ENCODE measurements at regions of chr12 and their contacts with region 1.

Region 1: DNA sequence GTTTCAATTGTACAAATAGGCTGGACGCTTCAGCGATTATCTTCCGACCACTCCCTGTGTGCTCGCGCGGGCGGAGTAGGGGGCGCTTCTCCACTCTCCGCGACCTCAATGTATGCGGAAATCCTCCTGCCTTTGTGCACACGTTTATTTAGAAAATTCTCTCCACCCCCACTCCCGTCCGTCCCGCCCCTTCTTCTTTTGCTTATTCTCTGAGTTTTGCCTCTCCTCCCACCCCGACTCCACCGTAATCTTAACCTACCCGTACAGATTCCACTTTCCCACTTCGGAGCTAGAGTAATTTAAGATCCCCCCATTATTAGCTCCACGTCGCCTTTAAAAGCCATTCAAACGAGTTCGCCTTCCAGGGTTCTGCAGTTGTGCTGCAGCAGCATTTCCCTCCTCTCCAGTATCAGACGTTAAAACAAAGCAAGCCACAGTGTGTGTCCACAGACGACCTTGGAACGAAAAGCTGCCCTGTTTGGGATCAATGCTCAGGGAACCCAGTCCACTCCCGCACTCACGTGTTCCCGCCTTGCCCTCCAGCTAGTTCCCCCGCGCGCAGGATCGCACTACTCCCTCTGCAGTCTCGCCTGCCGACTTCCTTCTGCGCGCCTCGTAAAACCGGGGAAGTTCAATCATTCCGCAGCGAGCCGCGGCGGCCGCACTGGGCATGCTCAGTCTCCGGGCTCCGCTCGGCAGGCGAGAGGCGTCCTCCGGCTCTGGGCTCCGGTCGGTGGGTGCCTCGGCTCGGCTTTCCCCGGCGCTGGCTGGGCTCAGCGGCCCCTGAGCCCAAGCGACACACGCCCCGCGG is at the start of gene ANO6:
- DNase-seq: peak; percentile 95
- H3K4me3 Mint-ChIP-seq: peak within 1 kb of the TSS; percentile 93
- H3K27ac Mint-ChIP-seq: peak within 1 kb of the TSS; percentile 90
- H3K4me1 Mint-ChIP-seq: peaks cover 30% of the 10 kb centered on the region
- H3K27me3 Mint-ChIP-seq: no peaks in the 10 kb centered on the region
- total RNA-seq, gene ANO6: 24.1 and 24.8 TPM in 2 replicates

Region 2: DNA sequence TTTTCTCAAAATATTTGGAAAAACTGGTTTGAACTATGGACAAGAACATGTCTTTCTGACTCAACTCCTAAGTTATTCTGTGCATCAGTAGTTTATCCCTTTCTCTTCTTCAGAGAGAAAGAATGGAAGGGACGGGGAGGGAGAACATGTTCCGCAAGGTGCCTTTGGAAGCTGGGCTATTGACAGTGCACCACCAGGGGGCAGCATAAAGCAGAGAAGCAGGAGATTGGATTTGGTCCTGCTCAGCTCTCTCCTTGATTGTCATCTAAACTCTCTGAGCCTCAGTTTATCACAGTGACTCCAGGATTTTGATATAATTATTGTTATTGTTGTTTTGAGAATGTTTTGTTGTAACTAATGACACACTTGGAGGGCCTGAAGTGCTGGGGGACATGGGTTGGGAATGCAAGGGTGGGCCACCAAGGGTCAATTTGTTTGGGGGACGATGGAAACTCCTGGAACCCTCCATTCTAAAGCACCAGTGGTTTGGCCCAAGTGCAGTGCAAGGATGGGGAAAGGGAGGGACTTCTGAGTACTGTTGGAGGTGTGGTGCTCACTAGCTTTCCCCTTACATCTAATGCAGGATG is 45.1 kb before region 1 on chr12:
- intact Hi-C with region 1: loop called (anchors 5 kb)
- DNase-seq: peak; percentile 92
- H3K4me3 Mint-ChIP-seq: no peak overlapping the region
- H3K27ac Mint-ChIP-seq: no peak overlapping the region
- H3K4me1 Mint-ChIP-seq: no peaks in the 10 kb centered on the region
- H3K27me3 Mint-ChIP-seq: peaks cover 4% of the 10 kb centered on the region

Region 3: DNA sequence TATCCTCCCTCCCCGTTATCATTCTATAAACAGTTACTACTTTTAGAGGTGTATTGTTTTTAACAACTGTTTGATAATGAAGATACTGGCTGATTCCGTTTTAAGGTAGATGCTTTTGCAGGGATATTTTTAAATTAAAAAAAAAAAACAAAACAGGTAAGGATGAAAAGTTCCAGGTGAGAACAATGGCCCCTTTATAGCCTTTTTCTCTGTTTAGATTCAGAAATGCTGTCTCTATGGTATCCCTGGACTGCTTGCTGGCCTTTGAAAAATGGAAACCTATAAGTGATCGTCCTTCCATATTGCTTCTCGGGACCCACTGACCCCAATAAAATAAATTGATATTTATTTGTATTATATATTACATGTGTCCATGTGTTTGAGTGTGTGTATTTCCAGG is 22.9 kb before region 1 on chr12:
- intact Hi-C with region 1: loop called (anchors 2 kb)
- DNase-seq: no peak
- H3K4me3 Mint-ChIP-seq: no peak overlapping the region
- H3K27ac Mint-ChIP-seq: no peak overlapping the region
- H3K4me1 Mint-ChIP-seq: peaks cover 13% of the 10 kb centered on the region
- H3K27me3 Mint-ChIP-seq: no peaks in the 10 kb centered on the region

Region 4: GRCh38 chr12:45205165-45205825 is 10.3 kb before region 1 on chr12:
- intact Hi-C with region 1: loop called (anchors 1 kb)
- DNase-seq: no peak
- H3K4me3 Mint-ChIP-seq: no peak overlapping the region
- H3K27ac Mint-ChIP-seq: no peak overlapping the region
- H3K4me1 Mint-ChIP-seq: peaks cover 5% of the 10 kb centered on the region
- H3K27me3 Mint-ChIP-seq: no peaks in the 10 kb centered on the region

Region 5: DNA sequence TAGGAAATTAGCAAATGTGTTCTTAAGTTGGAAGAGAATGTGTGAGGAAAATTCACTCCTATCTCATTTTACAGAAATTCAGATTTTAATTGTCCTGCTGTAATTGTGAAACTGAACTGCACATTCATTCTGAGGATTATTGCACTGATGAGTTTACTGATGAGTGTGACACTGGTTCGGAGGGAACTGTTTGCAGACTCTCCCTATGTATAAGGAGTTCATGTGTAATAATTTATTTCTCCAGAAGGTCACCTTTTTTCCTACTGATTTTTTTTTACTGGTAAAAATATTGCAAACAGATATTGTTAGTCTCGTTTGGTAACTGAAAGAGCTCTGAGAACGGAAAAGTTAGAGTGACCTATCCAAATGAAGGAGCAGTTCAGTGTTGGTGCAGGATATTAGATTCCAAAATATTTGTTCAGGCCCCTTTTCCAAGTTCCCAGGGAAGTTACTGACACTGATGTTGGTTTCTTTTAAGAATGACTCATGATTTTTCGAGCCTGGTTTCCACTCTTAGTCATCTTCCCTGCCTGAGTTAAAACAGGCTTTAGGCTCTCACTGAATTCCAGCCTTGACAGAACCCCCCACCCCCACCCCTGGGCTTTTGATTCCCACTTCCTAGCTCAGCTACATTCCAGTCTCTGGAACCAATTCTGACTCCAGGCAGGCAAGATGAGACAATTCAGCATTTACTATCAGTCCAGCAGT is 18.7 kb after region 1 on chr12:
- intact Hi-C with region 1: loop called (anchors 1 kb)
- DNase-seq: no peak
- H3K4me3 Mint-ChIP-seq: peak overlapping the region; percentile 2
- H3K27ac Mint-ChIP-seq: peak overlapping the region; percentile 69
- H3K4me1 Mint-ChIP-seq: peaks cover 40% of the 10 kb centered on the region
- H3K27me3 Mint-ChIP-seq: no peaks in the 10 kb centered on the region